Heart left ventricle (tissue), 16 donors: ENCODE measurements at regions of chr11 and their contacts with region 1.

Region 1: DNA sequence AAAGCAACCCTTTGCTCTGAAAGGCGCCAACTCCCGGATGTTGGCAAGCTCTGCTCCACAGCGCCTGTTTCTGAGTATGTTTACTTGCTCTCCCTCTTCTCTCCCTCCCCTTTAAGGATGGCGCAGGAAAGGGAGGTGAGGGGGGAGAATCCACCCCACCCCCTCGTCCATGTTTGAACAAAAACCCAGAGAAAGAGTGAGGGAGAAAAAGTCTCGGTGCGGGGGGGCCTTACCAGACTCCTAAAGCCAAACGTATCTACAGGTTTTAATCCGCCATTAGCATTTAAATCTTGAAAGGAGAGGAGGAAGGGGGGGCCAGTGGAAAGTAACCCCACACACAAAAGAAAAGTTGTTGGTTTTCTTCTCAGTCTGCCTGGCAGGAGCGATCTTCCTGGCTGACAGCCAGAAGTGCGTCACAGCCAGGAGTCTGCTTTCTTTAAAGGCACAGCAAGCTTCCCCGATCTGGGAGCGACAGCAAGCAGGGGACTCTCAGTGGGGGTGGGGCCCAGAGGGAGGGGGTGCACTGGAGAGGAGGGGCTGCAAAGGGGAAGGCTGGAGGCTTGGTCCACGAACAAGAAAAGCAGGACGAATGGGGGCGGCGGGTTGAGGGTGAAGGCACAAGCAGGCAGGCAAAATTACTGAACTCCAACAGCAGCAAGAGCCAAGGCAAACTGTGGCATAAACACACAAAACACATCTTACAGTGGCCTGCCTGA is 39.5 kb downstream of the NUMA1 start:
- DNase-seq: peak; percentile 95 to 98 (median 95)
- ATAC-seq: peak; percentile 79 to 87 (median 85)
- H3K4me3 ChIP-seq: peak overlapping the region; percentile 48 to 82 (median 64)
- H3K27ac ChIP-seq: peak overlapping the region; percentile 94 to 100 (median 98)
- H3K4me1 ChIP-seq: peaks cover 19 to 63% (median 52%) of the 10 kb centered on the region in 12 donors
- H3K27me3 ChIP-seq: no peaks in the 10 kb centered on the region
- CTCF ChIP-seq: no peak
- POLR2A ChIP-seq: no peak

Region 2: DNA sequence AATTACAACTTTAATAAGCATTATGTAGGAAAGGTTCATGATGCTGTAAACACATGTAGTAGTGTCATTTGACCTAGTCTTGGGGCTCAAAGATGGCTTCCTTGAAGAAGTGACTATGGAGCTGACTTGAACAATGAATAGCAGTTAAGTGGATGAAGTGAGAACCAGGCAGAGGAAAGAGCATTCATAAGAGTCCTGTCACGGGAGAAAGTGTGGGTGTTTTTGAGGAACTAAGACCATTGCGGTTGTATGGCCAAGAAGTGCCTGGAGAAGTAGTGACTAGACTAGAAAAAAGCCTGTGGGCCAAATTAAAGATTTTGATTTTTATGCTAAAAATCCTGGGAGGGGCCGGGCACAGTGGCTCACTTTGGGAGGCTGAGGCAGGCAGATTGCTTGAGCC is 49.4 kb before region 1 on chr11:
- intact Hi-C with region 1: no loop called
- DNase-seq: no peak
- ATAC-seq: peak in 3 of 4 donors; percentile 32 to 60 (median 51)
- H3K4me3 ChIP-seq: no peak overlapping the region
- H3K27ac ChIP-seq: peak overlapping the region in 1 of 12 donors; percentile 68
- H3K4me1 ChIP-seq: peaks cover 0 to 23% (median 3%) of the 10 kb centered on the region in 12 donors
- H3K27me3 ChIP-seq: no peaks in the 10 kb centered on the region
- CTCF ChIP-seq: no peak
- POLR2A ChIP-seq: no peak

Region 3: DNA sequence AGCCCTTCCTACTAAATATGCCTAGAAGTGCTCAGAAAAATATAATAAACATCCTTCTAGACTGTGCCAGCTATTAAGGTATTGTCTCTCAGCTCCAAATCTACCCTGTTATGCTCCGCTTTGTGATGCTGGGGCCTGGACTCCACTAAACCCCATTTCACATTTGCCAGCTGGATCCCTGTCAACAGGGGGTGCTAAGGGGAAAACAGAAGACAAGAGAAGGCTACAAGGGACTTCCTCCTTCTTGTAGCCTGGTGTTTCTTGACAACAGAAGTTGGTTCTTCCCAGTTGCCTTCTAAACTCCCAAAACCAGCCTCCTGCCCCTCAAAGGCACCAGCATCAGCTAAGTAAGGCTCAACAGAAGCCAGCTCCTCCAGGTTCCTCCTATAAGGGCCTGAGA is 34.2 kb after region 1 on chr11:
- intact Hi-C with region 1: loop called (anchors 1 to 5 kb)
- DNase-seq: no peak
- ATAC-seq: no peak
- H3K4me3 ChIP-seq: peak overlapping the region in 1 of 12 donors; percentile 16
- H3K27ac ChIP-seq: peak overlapping the region in 1 of 12 donors; percentile 70
- H3K4me1 ChIP-seq: peaks cover 4 to 59% (median 17%) of the 10 kb centered on the region in 12 donors
- H3K27me3 ChIP-seq: no peaks in the 10 kb centered on the region
- CTCF ChIP-seq: peak in 1 of 12 donors; percentile 18
- POLR2A ChIP-seq: no peak

Region 4: GRCh38 chr11:72080256-72080974 is 39.5 kb after region 1 on chr11 and contains the starts of genes LRRC51 and NUMA1:
- intact Hi-C with region 1: loop called (anchors 1 to 5 kb)
- DNase-seq: peak; percentile 99 to 100 (median 99)
- ATAC-seq: peak; percentile 97 to 99 (median 98)
- H3K4me3 ChIP-seq: peak within 1 kb of the TSS; percentile 70 to 94 (median 82)
- H3K27ac ChIP-seq: peak within 1 kb of the TSS; percentile 81 to 93 (median 87)
- H3K4me1 ChIP-seq: peaks cover 0 to 44% (median 16%) of the 10 kb centered on the region in 12 donors
- H3K27me3 ChIP-seq: no peaks in the 10 kb centered on the region
- CTCF ChIP-seq: no peak
- POLR2A ChIP-seq: peak in 1 of 2 donors; percentile 65
- total RNA-seq, gene LRRC51: 2.0 to 8.3 (median 4.5) TPM
- total RNA-seq, gene NUMA1: 62.7 to 193 (median 101) TPM

Region 5: DNA sequence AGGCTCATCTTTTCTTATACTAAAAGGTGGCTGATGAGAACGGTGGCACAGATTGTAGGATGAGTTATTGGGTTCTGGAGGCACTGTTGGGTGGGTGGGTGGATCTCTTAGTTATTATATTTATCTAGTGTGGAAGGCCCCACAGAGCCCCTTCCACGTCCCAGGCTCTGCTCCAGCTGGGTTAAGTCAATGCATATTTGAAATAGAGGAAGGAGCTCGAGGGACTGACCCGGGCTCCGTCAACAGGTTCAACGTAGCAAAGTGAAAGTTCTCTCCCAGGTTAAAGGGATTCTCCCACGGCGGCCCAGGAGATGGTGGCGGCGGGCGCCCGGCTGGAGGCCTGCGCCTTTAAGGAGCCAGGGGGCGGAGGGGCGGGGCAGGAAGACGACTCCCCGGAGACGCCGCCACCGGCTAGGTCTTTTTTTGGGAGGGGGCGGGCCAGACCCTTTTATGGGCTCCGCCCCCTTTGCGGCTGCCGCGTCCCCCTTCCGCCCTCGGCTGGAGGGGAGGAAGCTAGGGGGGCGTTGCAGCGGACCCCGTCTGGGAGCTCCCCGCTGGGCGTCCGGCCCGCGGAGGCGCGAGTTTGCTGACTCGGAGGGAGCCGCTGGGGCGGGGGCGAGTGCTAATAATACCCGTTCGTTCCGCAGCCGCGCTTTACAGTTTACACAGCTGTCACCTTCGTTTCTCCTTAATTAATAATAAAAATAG is 182.2 kb after region 1 on chr11:
- intact Hi-C with region 1: loop called in 1 of 10 experiments (anchors 5 kb)
- DNase-seq: peak; percentile 96 to 98 (median 97)
- ATAC-seq: peak; percentile 89 to 96 (median 92)
- H3K4me3 ChIP-seq: peak overlapping the region; percentile 58 to 99 (median 88)
- H3K27ac ChIP-seq: peak overlapping the region; percentile 90 to 100 (median 99)
- H3K4me1 ChIP-seq: peaks cover 0 to 52% (median 17%) of the 10 kb centered on the region in 12 donors
- H3K27me3 ChIP-seq: peaks cover 0 to 4% (median 0%) of the 10 kb centered on the region in 9 donors
- CTCF ChIP-seq: peak; percentile 17 to 68 (median 46)
- POLR2A ChIP-seq: peak; percentile 86 to 91

Region 6: GRCh38 chr11:72378704-72379384 is 338.0 kb after region 1 on chr11:
- intact Hi-C with region 1: no loop called
- DNase-seq: peak in 4 of 5 donors; percentile 63 to 88 (median 76)
- ATAC-seq: peak; percentile 95 to 98 (median 96)
- H3K4me3 ChIP-seq: no peak overlapping the region
- H3K27ac ChIP-seq: peak overlapping the region in 5 of 12 donors; percentile 20 to 48 (median 30)
- H3K4me1 ChIP-seq: peaks cover 0 to 16% (median 4%) of the 10 kb centered on the region in 12 donors
- H3K27me3 ChIP-seq: no peaks in the 10 kb centered on the region
- CTCF ChIP-seq: no peak
- POLR2A ChIP-seq: no peak